Activated CD4-positive, alpha-beta memory T cell treated with anti-CD3 and anti-CD28 coated beads for 36 hours (primary cell): ENCODE measurements at regions of chr12 and their contacts with region 1.

Region 1: GRCh38 chr12:68807576-68808387 is at the start of gene MDM2:
- DNase-seq: peak; percentile 97
- H3K4me3 Mint-ChIP-seq: peak within 1 kb of the TSS; percentile 93
- H3K27ac Mint-ChIP-seq: peak within 1 kb of the TSS; percentile 99
- H3K4me1 Mint-ChIP-seq: peaks cover 28% of the 10 kb centered on the region
- H3K27me3 Mint-ChIP-seq: no peaks in the 10 kb centered on the region
- total RNA-seq, gene MDM2: 125 to 136 TPM

Region 2: DNA sequence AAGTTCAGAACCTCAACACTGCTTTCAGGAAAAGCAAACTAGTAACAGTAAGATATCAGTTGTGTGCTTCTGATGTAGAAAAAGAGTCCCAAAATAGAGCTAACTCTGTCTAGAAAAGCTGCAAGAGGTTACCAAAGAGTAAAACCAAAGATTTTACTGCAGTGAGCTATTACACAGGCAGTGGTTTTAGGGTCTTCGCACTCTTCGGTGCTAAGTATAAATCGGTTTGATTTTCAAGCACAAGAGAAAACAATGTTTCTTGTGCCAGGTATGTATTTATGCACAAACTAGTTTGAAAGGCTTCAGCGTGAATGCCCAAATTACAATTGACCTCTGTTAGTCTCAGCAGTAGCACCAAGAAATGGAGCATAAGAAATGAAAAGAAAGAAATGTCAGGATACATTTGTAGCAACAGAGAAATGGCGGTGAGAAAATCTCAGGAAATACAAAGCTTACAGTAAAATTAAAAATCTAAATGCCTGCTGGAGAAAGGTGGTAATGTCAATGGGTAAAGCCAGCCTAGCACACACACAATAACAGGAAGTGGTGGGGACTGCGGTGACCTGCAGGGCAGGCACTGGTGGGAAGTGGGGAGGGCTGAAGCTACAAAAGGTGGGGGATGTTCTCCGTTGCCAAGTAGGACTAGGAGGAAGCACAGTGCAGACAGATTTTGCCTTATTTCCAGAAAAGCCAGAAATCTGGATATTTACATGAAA is 1177.3 kb before region 1 on chr12:
- CTCF ChIA-PET with region 1: no interaction called
- POLR2A ChIA-PET with region 1: no interaction called
- intact Hi-C with region 1: loop called (anchors 10 kb)
- DNase-seq: peak; percentile 92
- H3K4me3 Mint-ChIP-seq: peak overlapping the region; percentile 58
- H3K27ac Mint-ChIP-seq: peak overlapping the region; percentile 81
- H3K4me1 Mint-ChIP-seq: peaks cover 68% of the 10 kb centered on the region
- H3K27me3 Mint-ChIP-seq: peaks cover 2% of the 10 kb centered on the region

Region 3: GRCh38 chr12:68358532-68359485 is 449.0 kb before region 1 on chr12:
- CTCF ChIA-PET with region 1: interaction called, 3 read pairs
- POLR2A ChIA-PET with region 1: no interaction called
- intact Hi-C with region 1: loop called (anchors 1 kb)
- DNase-seq: peak; percentile 71
- H3K4me3 Mint-ChIP-seq: no peak overlapping the region
- H3K27ac Mint-ChIP-seq: no peak overlapping the region
- H3K4me1 Mint-ChIP-seq: peaks cover 21% of the 10 kb centered on the region
- H3K27me3 Mint-ChIP-seq: no peaks in the 10 kb centered on the region

Region 4: GRCh38 chr12:68451261-68452077 is 356.3 kb before region 1 on chr12:
- CTCF ChIA-PET with region 1: interaction called, 3 read pairs
- POLR2A ChIA-PET with region 1: no interaction called
- intact Hi-C with region 1: loop called (anchors 1 kb)
- DNase-seq: peak; percentile 70
- H3K4me3 Mint-ChIP-seq: peak overlapping the region; percentile 33
- H3K27ac Mint-ChIP-seq: peak overlapping the region; percentile 95
- H3K4me1 Mint-ChIP-seq: peaks cover 85% of the 10 kb centered on the region
- H3K27me3 Mint-ChIP-seq: no peaks in the 10 kb centered on the region

Region 5: GRCh38 chr12:68821357-68822188 is 13.8 kb after region 1 on chr12:
- CTCF ChIA-PET with region 1: interaction called, 12 read pairs
- POLR2A ChIA-PET with region 1: interaction called, 6 read pairs
- intact Hi-C with region 1: no loop called
- DNase-seq: no peak
- H3K4me3 Mint-ChIP-seq: no peak overlapping the region
- H3K27ac Mint-ChIP-seq: peak overlapping the region; percentile 63
- H3K4me1 Mint-ChIP-seq: peaks cover 38% of the 10 kb centered on the region
- H3K27me3 Mint-ChIP-seq: no peaks in the 10 kb centered on the region